Activated naive CD4-positive, alpha-beta T cell treated with anti-CD3 and anti-CD28 coated beads for 36 hours (primary cell): ENCODE measurements at regions of chr4 and their contacts with region 1.

Region 1: GRCh38 chr4:168293386-168293975 is 25.1 kb downstream of the DDX60 start:
- DNase-seq: no peak
- H3K4me3 Mint-ChIP-seq: no peak overlapping the region
- H3K27ac Mint-ChIP-seq: no peak overlapping the region
- H3K4me1 Mint-ChIP-seq: no peaks in the 10 kb centered on the region
- H3K27me3 Mint-ChIP-seq: no peaks in the 10 kb centered on the region

Region 2: DNA sequence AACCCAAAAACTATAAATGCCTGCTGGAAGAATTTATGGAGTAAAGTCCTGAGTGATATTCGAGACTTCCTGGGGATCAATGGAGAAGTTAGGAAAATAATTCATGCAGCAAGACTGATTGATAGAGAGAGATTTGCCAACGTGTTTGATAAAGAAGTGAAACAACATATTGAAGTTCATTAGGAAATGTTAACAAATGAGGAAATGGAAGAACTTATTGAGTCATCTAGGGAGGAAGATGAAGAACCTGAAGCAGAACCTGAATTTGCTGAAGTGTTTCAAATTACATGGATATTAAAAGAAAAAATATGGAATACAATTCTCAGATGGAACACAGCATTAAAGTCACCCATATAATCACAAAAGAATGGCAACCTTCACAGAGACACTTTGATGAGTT is 13.9 kb before region 1 on chr4:
- CTCF ChIA-PET with region 1: interaction called, 3 read pairs
- intact Hi-C with region 1: loop called (anchors 2 kb)
- DNase-seq: no peak
- H3K4me3 Mint-ChIP-seq: no peak overlapping the region
- H3K27ac Mint-ChIP-seq: no peak overlapping the region
- H3K4me1 Mint-ChIP-seq: no peaks in the 10 kb centered on the region
- H3K27me3 Mint-ChIP-seq: no peaks in the 10 kb centered on the region